Activated CD8-positive, alpha-beta memory T cell treated with anti-CD3 and anti-CD28 coated beads, Interleukin-2, amount 10 ng/mL, durations not matched to agents 7 days and 5 days (primary cell): ENCODE measurements at regions of chr2 and their contacts with region 1.

Region 1: DNA sequence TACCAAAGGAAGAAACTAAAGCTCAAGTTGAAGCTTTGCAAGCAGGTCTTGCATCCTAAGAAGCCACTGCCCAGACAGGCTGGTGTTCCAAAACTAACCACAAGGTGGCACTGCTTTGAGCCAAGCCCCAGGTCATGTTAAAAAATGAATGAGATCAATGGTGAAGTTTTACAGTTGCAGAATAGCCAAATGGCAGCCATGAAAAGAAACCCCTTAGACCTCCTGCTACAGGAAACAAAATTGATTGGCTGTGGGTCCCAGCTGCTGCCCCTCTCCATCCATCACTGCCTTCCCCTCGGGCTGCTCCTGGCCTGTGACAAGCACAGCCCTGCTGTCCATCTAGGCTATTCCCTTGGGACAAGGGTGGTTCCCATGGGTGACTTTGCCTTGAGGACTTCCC is 20.7 kb upstream of the MREG start:
- DNase-seq: peak; percentile 88
- ATAC-seq: peak; percentile 57
- H3K4me3 Mint-ChIP-seq: no peak overlapping the region
- H3K27ac Mint-ChIP-seq: no peak overlapping the region
- H3K4me1 Mint-ChIP-seq: peaks cover 50% of the 10 kb centered on the region
- H3K27me3 Mint-ChIP-seq: no peaks in the 10 kb centered on the region

Region 2: DNA sequence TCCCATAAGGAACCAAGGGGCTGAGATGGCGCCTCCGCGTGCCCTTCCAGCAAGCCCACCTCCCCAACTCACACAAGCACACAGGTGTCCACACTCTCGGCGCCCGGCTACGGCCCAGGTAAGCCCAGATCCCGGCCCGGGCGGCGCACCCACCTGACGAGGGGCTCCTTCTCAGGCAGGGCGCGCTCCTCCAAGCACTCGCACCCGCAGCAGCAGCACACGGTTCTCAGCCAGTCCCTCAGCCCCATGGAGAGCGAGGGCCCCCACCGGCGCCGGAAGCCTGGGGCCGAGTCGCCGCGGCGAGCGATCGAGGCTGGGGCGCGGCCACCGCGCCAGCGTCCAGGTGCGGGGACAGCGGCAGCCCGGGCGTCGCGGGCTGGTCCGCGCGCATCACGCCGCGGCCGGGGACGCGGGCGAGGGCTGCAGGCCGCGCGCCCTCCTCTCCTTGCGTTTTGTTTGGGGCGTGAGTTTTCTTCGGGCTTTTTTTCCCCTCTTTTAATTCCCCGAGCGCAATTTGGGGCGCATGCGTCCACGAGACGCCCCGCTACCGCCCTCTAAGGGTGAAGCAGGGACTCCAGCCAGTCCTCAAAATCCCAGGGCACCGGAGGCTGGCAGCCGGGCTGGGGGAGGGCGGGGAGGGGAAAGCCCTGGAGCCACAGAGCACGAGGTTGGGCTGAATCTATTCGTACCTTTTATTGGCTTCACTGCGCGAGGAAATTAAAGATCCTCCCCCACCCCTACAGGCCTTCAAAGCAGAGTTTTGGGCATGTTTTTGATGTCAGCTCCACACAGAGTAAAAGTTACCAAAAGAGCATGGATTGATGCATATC is 20.8 kb before region 1 on chr2 and contains the start of gene MREG:
- CTCF ChIA-PET with region 1: interaction called, 18 read pairs
- DNase-seq: peak; percentile 91
- ATAC-seq: peak; percentile 73
- H3K4me3 Mint-ChIP-seq: peak within 1 kb of the TSS; percentile 90
- H3K27ac Mint-ChIP-seq: peak within 1 kb of the TSS; percentile 69
- H3K4me1 Mint-ChIP-seq: peaks cover 66% of the 10 kb centered on the region
- H3K27me3 Mint-ChIP-seq: no peaks in the 10 kb centered on the region
- total RNA-seq, gene MREG: 16.2 to 26.7 TPM

Region 3: GRCh38 chr2:216023055-216023648 is 10.9 kb before region 1 on chr2:
- CTCF ChIA-PET with region 1: interaction called, 41 read pairs
- DNase-seq: peak; percentile 66
- ATAC-seq: peak; percentile 93
- H3K4me3 Mint-ChIP-seq: no peak overlapping the region
- H3K27ac Mint-ChIP-seq: no peak overlapping the region
- H3K4me1 Mint-ChIP-seq: peaks cover 10% of the 10 kb centered on the region
- H3K27me3 Mint-ChIP-seq: no peaks in the 10 kb centered on the region

Region 4: DNA sequence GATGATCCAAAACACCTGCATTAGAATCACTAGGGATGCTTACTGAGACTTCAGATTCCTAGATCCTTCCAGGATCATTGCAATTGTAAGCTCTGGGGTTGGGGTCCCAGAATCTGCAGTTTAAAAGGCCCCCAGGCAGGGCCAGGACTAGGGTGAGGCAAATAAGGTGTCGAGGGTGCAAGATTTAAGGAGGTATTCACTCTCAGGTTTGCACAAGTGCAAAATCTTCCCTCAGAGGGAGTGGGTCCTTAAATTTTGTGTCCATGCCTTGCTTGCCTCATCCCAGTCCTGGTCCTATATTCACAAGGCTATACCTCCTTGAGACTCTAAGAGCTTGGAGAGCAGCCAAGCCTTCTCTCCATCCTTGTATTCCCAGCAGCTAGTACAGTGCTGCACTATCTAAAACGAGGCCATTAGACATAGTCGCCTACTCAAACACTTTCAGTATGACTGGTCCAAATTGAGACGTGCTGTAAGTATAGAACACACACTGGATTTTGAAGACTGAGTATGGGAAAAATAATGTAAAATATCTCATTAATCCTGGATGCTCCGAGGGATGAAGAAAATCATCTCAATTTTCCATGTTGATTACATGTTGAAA is 10.9 kb after region 1 on chr2:
- CTCF ChIA-PET with region 1: interaction called, 11 read pairs
- DNase-seq: no peak
- ATAC-seq: peak; percentile 91
- H3K4me3 Mint-ChIP-seq: no peak overlapping the region
- H3K27ac Mint-ChIP-seq: peak overlapping the region; percentile 3
- H3K4me1 Mint-ChIP-seq: peaks cover 12% of the 10 kb centered on the region
- H3K27me3 Mint-ChIP-seq: no peaks in the 10 kb centered on the region

Region 5: GRCh38 chr2:216057688-216058193 is 23.7 kb after region 1 on chr2:
- CTCF ChIA-PET with region 1: interaction called, 46 read pairs
- DNase-seq: peak; percentile 84
- ATAC-seq: peak; percentile 98
- H3K4me3 Mint-ChIP-seq: peak overlapping the region; percentile 59
- H3K27ac Mint-ChIP-seq: peak overlapping the region; percentile 97
- H3K4me1 Mint-ChIP-seq: peaks cover 39% of the 10 kb centered on the region
- H3K27me3 Mint-ChIP-seq: no peaks in the 10 kb centered on the region